ENCODE measurements at regions of chr15 and their contacts with region 1.

Region 1: GRCh38 chr15:28021281-28022039 is 77.7 kb downstream of the OCA2 start:
- DNase-seq: peak; percentile 96
- H3K4me3 ChIP-seq: no peak overlapping the region
- H3K27ac ChIP-seq: peak overlapping the region in 1 of 2 experiments; percentile 74; a peak in 2 of 4 replicates
- H3K4me1 ChIP-seq: peaks cover 0 to 23% of the 10 kb centered on the region in 2 experiments; a peak in 2 of 4 replicates
- H3K27me3 ChIP-seq: no peaks in the 10 kb centered on the region
- CTCF ChIP-seq: peak; percentile 51
- EP300 ChIP-seq: 0 out of 4 replicates have a peak, but pooled peaks of 1 of the 2 experiments have one; percentile 30
- RAD21 ChIP-seq: peak; percentile 75

Region 2: GRCh38 chr15:27623560-27624305 is 397.7 kb before region 1 on chr15:
- CTCF ChIA-PET with region 1: no interaction called
- POLR2A ChIA-PET with region 1: no interaction called
- DNase-seq: no peak
- H3K4me3 ChIP-seq: no peak overlapping the region
- H3K27ac ChIP-seq: no peak overlapping the region
- H3K4me1 ChIP-seq: no peaks in the 10 kb centered on the region
- H3K27me3 ChIP-seq: no peaks in the 10 kb centered on the region
- CTCF ChIP-seq: no peak
- EP300 ChIP-seq: no peak
- RAD21 ChIP-seq: no peak

Region 3: GRCh38 chr15:28033443-28033842 is 12.0 kb after region 1 on chr15:
- CTCF ChIA-PET with region 1: interaction called, 23 read pairs
- POLR2A ChIA-PET with region 1: no interaction called
- DNase-seq: no peak
- H3K4me3 ChIP-seq: no peak overlapping the region
- H3K27ac ChIP-seq: no peak overlapping the region
- H3K4me1 ChIP-seq: no peaks in the 10 kb centered on the region; a peak in 1 of 4 replicates
- H3K27me3 ChIP-seq: no peaks in the 10 kb centered on the region
- CTCF ChIP-seq: no peak
- EP300 ChIP-seq: no peak
- RAD21 ChIP-seq: no peak

Region 4: DNA sequence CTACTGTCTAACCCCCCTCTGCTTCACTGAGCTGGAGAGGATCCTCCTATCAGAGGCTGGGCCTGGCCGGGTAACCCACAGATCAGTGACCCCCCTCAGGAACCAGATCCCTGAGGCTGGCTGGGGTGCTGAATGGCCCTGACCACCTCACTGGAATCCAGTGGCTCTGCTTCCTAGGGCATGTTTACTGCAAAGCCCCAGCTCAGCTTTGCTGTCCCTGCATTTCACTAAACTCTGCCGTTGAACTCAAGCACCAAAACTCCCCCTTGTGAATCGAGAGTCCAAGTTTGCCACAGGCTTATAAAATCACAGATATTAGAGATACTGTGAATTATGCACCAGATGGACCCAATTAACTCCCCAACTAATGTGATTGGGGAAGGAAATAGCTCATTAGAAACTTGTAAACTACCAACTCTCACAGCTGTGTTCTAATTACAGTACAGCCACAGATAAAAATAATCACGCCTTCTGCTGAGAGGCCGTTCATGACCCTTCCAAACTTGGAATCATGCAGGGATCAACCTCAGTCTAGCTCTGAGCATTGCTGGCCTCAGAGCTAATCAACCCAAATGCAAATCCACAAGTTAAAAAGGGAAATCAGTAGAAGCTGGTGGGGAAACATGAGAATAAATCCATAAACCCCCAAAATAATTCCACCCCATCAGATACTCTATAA is 30.6 kb after region 1 on chr15:
- CTCF ChIA-PET with region 1: interaction called, 26 read pairs
- POLR2A ChIA-PET with region 1: no interaction called
- DNase-seq: peak; percentile 54
- H3K4me3 ChIP-seq: no peak overlapping the region
- H3K27ac ChIP-seq: peak overlapping the region in 1 of 2 experiments; percentile 64; a peak in 2 of 4 replicates
- H3K4me1 ChIP-seq: peaks cover 0 to 32% of the 10 kb centered on the region in 2 experiments; a peak in 1 of 4 replicates
- H3K27me3 ChIP-seq: no peaks in the 10 kb centered on the region
- CTCF ChIP-seq: no peak
- EP300 ChIP-seq: peak in 1 of 2 experiments; percentile 54; a peak in 1 of 4 replicates
- RAD21 ChIP-seq: peak; percentile 34

Region 5: GRCh38 chr15:28080386-28080785 is 58.9 kb after region 1 on chr15:
- CTCF ChIA-PET with region 1: interaction called, 11 read pairs
- POLR2A ChIA-PET with region 1: no interaction called
- DNase-seq: no peak
- H3K4me3 ChIP-seq: no peak overlapping the region
- H3K27ac ChIP-seq: no peak overlapping the region
- H3K4me1 ChIP-seq: no peaks in the 10 kb centered on the region
- H3K27me3 ChIP-seq: no peaks in the 10 kb centered on the region
- CTCF ChIP-seq: no peak
- EP300 ChIP-seq: no peak
- RAD21 ChIP-seq: no peak

Region 6: DNA sequence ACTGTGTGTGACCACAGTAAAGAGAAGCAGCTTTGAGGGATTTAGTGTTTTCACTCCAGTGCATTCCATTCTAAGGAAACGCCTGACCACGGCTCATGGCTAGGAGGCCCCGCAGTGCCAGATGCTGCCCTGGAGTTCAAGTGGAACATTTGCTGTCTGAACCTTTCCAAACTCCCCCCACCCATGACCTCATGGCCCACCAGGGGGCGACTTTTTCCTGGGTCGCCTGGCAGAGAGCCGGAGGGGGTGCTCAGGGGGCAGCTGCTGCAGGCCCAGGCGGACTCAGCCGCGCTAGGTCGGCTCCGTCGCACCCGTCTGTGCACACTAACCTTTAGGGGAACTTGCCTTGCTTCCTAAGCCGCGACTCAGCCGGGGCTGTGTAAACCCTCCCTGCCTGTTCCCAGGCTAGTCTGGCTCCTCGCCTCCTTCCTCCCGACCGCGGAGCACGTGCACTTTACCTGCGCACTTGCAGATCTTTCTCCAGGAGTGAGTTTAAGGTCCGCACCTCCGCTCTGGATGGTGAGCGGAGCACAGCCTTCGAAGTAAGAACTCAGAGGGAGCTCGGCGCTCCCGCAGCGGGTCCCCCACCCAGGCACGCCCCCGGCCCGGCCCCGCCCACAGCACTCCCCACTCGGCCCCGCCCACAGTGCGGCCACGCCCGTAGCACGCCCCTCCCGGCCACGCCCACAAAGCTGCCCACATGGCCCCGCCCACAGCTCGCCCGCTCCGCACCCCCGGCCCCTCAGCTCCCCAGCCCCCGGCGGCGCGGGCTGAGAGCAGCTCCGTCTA is 77.5 kb after region 1 on chr15 and contains the start of gene OCA2:
- CTCF ChIA-PET with region 1: interaction called, 37 read pairs
- POLR2A ChIA-PET with region 1: interaction called, 3 read pairs
- DNase-seq: peak; percentile 95
- H3K4me3 ChIP-seq: peak within 1 kb of the TSS; percentile 32 to 45; a peak in 3 of 4 replicates
- H3K27ac ChIP-seq: no peak within 1 kb of the TSS
- H3K4me1 ChIP-seq: peaks cover 0 to 16% of the 10 kb centered on the region in 2 experiments; a peak in 1 of 4 replicates
- H3K27me3 ChIP-seq: peaks cover 13% of the 10 kb centered on the region
- CTCF ChIP-seq: peak; percentile 47
- EP300 ChIP-seq: no peak
- RAD21 ChIP-seq: no peak; the same call in 1 of the 2 replicates
- polyA plus RNA-seq, gene OCA2: 0.10 and 0.16 TPM in 2 replicates

Region 7: GRCh38 chr15:28123408-28124023 is 102.1 kb after region 1 on chr15:
- CTCF ChIA-PET with region 1: interaction called, 44 read pairs
- POLR2A ChIA-PET with region 1: no interaction called
- DNase-seq: peak; percentile 87
- H3K4me3 ChIP-seq: peak overlapping the region in 1 of 2 experiments; percentile 14; a peak in 1 of 4 replicates
- H3K27ac ChIP-seq: no peak overlapping the region
- H3K4me1 ChIP-seq: no peaks in the 10 kb centered on the region; a peak in 1 of 4 replicates
- H3K27me3 ChIP-seq: no peaks in the 10 kb centered on the region
- CTCF ChIP-seq: peak; percentile 83
- EP300 ChIP-seq: no peak
- RAD21 ChIP-seq: peak; percentile 80